ENCODE measurements at regions of chr6 and their contacts with region 1.

Region 1: DNA sequence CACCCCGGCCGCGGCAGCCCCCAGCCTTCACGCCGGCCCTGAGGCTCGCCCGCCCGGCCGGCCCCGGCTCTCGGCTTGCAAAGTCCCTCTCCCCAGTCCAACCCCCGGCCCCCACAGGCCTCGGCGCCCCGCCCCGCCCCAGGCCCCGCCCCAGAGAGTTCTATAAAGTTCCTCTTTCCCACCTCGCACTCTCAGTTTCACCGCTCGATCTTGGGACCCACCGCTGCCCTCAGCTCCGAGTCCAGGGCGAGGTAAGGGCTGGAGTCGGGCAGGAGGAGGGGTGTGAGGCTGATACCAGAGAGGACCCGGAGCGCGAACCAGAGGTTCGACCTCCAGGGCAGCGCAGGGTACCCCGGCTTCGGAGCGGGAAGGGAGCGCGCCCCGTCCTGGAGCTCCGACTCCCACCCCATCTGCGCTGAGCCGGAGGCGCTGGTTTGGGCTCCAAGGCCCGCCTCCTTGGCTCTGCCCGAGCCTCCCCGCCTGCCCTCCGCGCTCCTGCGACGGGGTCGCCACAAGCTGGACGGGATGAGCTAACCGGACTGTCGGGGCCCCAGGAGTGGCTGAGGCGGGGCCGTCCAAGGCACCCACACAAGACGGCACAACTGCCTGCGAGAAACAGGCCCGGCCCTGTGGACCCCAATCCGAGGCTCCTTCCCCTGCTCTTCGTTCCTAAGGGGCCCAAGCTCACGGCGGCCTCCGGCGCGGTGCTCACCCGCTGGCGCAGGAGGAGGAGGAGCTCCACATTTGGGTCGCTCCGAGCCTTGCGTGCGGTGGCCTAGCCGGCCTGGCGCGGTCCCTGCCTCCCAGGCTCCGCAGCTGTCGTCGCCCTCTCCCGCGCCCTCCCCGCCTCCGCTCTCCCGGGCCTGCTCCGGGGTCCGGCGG is at the start of gene IRF4:
- DNase-seq: peak; percentile 92
- CTCF ChIP-seq: no peak

Region 2: GRCh38 chr6:188821-189655 is 202.8 kb before region 1 on chr6:
- CTCF ChIA-PET with region 1: interaction called, 39 read pairs
- POLR2A ChIA-PET with region 1: interaction called, 30 read pairs
- DNase-seq: peak; percentile 85
- CTCF ChIP-seq: peak; percentile 87

Region 3: GRCh38 chr6:217048-217659 is 174.6 kb before region 1 on chr6:
- CTCF ChIA-PET with region 1: interaction called, 4 read pairs
- POLR2A ChIA-PET with region 1: interaction called, 19 read pairs
- DNase-seq: no peak
- CTCF ChIP-seq: peak; percentile 50

Region 4: DNA sequence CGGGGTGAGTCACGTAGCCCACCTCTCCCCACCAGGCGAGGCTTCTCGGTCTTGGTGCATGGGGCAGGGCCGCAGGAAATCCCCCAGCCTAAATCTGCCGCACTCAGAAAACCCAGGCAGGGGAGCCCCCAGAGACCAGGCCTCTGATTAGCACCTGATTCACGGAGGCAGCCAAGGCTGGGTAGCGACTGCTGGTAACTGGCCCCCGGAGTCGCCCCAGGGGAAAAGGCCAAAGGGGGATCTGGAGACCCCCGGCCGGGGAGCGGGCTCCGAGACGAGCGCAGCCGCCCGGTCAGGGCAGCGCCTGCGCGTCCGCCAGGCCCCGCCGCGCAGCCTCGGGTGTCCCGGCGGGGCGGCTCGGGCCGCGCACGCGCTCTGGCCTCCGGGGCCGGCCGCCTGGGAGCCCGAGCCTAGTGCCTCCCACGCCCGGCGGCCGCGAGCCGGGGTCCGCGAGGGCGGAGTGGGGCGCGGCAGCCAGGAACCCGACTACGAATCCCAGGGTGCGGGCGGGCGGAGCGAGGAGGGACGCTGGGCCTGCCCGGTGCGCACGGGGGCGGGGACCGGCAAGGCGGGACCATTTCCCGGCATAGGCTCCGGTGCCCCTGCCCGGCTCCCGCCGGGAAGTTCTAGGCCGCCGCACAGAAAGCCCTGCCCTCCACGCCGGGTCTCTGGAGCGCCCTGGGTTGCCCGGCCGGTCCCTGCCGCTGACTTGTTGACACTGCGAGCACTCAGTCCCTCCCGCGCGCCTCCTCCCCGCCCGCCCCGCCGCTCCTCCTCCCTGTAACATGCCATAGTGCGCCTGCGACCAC is 99.9 kb before region 1 on chr6 and contains the start of gene DUSP22:
- CTCF ChIA-PET with region 1: no interaction called
- POLR2A ChIA-PET with region 1: interaction called, 24 read pairs
- DNase-seq: peak; percentile 100
- CTCF ChIP-seq: no peak

Region 5: GRCh38 chr6:328136-328670 is 63.6 kb before region 1 on chr6:
- CTCF ChIA-PET with region 1: no interaction called
- POLR2A ChIA-PET with region 1: interaction called, 34 read pairs
- DNase-seq: peak; percentile 84
- CTCF ChIP-seq: no peak

Region 6: GRCh38 chr6:364609-365540 is 26.9 kb before region 1 on chr6:
- CTCF ChIA-PET with region 1: interaction called, 21 read pairs
- POLR2A ChIA-PET with region 1: interaction called, 12 read pairs
- DNase-seq: peak; percentile 79
- CTCF ChIP-seq: no peak

Region 7: DNA sequence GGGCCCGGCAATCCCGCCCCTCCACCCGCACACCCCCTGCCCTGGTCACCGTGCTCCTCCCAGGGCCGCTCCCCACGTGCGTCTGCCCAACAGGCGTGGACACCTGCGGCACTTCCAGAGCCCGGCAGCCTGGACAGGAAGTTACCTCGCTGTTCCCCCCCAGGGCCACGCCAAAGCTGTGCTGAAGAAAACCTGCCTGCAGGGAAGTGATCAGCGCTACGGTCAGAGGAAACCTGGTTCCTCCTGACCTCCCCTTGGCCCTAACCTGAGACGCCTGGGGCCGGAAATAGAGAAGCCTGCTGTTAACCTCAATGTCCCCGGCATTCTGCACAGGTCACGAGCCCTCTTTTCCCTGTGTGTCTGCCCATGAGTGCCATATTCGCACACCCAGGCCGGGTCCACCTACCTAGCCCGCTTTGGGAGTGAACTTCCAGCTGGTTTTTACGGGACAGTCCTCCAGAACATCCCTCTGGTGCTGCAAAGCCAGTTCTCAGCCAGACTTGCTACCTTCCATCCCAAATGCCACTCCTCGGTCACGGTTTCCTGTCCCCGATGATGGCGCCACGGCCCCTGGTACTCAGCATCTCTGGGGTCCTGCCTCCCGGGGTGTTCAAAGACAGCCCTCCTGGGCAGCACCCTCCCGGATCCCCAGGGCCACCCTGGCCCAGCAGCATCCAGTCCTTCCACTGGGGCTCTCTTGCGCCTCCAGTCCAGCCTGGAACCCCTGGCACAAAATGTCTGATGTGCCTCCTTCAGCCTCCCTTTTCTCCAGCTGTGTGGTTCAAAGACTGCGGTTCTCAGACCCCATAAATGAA is 12.2 kb before region 1 on chr6:
- CTCF ChIA-PET with region 1: interaction called, 6 read pairs
- POLR2A ChIA-PET with region 1: interaction called, 12 read pairs
- DNase-seq: peak; percentile 79
- CTCF ChIP-seq: no peak

Measured in GM10248 (cell line).